Dorsolateral prefrontal cortex (tissue), 120 donors: ENCODE measurements at regions of chr4 and their contacts with region 1.

Region 1: GRCh38 chr4:41360214-41360920 is 103.6 kb downstream of the UCHL1 start:
- DNase-seq: peak; percentile 65 to 87 (median 80)
- H3K4me3 ChIP-seq: peak overlapping the region; percentile 64 to 97 (median 86)
- H3K27ac ChIP-seq: peak overlapping the region; percentile 82 to 100 (median 97)
- H3K27me3 ChIP-seq: no peaks in the 10 kb centered on the region
- CTCF ChIP-seq: peak in 20 of 56 donors; percentile 3 to 38 (median 16)

Region 2: GRCh38 chr4:41432881-41433280 is 72.5 kb after region 1 on chr4:
- intact Hi-C with region 1: loop called in 1 of 2 experiments (anchors 5 kb)
- DNase-seq: no peak
- H3K4me3 ChIP-seq: peak overlapping the region in 4 of 59 donors; percentile 4 to 23 (median 11)
- H3K27ac ChIP-seq: peak overlapping the region in 55 of 59 donors; percentile 7 to 89 (median 77)
- H3K27me3 ChIP-seq: no peaks in the 10 kb centered on the region
- CTCF ChIP-seq: no peak

Region 3: DNA sequence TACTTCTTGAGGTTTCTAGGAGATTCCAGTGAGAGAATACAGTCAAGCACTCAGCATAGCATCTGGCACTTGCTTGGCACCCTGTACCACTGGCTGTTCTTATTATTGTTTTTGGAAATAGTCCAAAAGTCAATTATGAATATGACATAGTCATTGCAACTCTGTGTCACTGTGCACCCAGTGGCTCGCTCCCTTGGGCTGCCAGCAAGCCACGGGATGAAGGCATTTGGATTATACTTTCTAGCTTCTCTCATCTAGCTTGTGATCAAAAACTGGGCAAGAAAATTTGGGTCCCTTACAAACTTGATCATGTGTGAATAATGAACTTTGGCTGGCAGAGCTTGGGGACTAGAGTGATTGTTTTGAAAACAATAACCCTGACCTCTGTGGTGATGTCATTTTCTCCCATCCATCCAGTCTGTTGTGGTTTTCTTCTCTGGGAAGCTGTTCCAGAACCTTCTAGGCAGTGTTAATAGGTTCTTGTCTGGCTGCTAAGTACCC is 144.8 kb after region 1 on chr4:
- intact Hi-C with region 1: loop called in 1 of 2 experiments (anchors 1 kb)
- DNase-seq: peak in 2 of 10 donors; percentile 22 to 52
- H3K4me3 ChIP-seq: peak overlapping the region in 1 of 59 donors; percentile 14
- H3K27ac ChIP-seq: peak overlapping the region in 46 of 59 donors; percentile 4 to 78 (median 51)
- H3K27me3 ChIP-seq: no peaks in the 10 kb centered on the region
- CTCF ChIP-seq: no peak

Region 4: DNA sequence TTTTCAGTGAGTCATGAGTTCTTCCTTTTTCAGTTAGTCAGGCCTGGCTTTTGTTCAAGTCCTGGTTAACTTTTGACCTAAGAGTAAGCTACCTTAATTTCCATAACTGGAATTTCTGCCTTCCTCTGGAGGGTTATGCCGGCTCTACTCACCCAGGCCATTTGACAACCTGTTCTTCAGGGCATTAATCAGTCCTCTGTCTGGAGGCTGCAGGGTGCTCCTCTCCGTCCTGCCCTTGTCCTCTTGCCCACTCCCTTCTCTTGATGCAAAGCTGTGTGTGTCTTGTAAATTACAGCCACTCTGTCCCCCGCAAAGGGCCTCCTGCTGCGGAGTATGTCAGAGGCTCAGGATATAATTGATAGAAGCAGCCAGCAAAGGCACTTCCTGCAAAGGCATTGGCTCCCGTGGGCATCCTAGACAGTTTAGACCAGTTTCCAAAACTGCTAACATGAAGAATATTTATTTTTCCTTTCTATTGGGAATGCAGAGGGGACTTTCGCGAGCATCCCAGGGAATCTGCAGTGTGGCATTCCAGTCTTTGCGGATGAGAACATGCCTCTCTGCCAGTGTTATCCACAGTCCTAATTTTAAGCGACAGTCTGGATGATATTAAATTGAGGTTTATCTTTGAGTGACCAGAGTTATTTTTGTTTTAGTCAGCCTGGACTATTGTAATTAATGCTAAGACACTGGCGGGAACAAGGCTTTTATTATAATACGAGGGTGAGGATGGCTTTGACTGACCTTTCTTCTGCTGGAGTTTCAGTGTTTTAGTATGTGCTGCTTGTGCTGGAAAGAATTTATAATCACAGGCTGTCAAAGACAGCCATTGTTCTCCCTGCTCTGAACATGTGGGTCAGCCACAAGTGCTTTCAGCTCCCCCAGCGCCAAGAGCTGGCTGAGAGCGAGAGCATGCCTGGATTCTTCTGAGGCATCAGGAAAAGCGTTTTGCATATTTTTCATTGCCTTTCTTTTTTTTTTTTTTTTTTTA is 251.8 kb after region 1 on chr4:
- intact Hi-C with region 1: loop called (anchors 2 kb)
- DNase-seq: peak; percentile 50 to 89 (median 86)
- H3K4me3 ChIP-seq: peak overlapping the region in 50 of 59 donors; percentile 11 to 61 (median 42)
- H3K27ac ChIP-seq: peak overlapping the region; percentile 2 to 91 (median 81)
- H3K27me3 ChIP-seq: no peaks in the 10 kb centered on the region
- CTCF ChIP-seq: peak in 26 of 56 donors; percentile 10 to 52 (median 28)

Region 5: DNA sequence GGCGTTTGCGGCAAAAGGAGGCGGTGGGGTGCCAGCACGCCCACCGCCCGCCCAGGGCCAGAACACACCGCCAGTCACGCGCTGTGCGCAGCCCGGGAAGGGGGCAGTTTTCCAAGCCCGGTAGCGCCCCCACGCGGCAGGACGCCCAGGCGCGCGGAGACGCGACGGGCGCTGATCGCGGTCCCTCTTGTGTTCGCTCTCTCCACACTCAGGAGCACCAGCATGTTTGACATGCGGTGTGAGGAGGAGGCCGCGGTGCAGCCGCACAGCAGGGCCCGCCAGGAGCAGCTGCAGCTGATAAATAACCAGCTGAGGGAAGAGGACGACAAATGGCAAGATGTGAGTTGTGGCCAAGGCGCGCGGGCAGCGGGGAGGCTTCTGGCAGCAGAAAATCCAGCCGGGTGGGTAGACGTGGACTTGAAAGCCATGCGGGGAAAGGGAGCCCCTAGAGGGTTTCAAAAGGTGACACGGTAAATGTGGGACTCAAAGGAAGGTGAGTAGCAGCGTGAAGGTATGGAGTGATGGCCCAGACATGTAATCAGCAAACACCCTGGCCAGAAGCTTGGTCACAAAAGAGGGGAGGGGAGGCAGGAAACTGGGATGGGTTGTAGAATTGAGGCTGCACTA is 284.0 kb after region 1 on chr4:
- intact Hi-C with region 1: loop called (anchors 5 kb)
- DNase-seq: peak; percentile 69 to 88 (median 81)
- H3K4me3 ChIP-seq: peak overlapping the region in 57 of 59 donors; percentile 0 to 59 (median 33)
- H3K27ac ChIP-seq: peak overlapping the region in 55 of 59 donors; percentile 9 to 87 (median 69)
- H3K27me3 ChIP-seq: no peaks in the 10 kb centered on the region
- CTCF ChIP-seq: peak; percentile 70 to 99 (median 96)